Esophagus muscularis mucosa (tissue), 4 donors: ENCODE measurements at regions of chr14 and their contacts with region 1.

Region 1: DNA sequence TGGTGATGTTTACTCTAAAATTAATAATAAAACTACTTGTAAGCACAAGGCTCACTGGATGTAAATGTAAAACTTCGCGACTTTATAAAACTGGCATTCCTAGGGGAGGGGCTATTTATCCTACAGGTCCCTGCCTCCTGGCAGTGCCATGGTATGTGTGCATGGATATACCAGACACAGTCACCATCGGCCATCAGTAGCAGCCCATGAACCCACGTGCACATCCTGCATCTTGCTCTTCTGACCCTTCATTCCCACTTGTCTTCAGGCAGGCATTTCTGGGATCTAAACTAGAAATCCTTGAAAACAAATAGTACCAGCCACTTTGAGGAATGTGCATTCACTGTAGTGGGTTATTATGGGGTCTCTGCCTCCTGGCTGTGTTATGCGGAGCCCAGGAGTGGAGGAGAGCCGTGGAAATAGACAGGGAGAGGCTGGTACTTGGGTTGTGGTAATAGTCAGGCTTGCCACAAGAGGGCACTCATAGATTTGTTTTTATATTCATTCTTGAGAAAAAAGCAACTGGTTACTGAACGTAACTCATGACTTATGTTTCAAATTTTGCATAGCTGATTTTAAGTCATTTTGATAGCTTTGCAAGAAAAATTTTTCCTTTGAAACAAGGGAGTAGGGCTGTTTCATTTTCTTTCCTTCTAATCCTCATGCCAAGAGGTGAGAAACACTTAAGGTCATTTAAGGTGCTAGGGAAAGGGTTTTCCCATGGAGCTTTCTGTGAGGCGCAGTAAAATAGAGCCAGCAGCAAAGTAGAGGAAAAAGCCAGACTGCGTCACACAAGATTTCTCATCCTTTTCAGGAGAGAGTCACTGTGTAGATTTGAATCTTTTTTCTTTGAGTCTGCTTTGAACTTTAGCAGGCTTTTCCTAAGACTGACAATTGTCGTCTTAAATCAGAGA is 17.4 kb upstream of the GALNT16 start:
- DNase-seq: no peak
- H3K4me3 ChIP-seq: no peak overlapping the region
- H3K27ac ChIP-seq: peak overlapping the region; percentile 12 to 52 (median 36)
- H3K4me1 ChIP-seq: peaks cover under 1 to 27% (median 20%) of the 10 kb centered on the region in 4 donors
- H3K27me3 ChIP-seq: no peaks in the 10 kb centered on the region
- CTCF ChIP-seq: peak; percentile 84 to 91 (median 86)
- EP300 ChIP-seq: no peak
- POLR2A ChIP-seq: no peak

Region 2: DNA sequence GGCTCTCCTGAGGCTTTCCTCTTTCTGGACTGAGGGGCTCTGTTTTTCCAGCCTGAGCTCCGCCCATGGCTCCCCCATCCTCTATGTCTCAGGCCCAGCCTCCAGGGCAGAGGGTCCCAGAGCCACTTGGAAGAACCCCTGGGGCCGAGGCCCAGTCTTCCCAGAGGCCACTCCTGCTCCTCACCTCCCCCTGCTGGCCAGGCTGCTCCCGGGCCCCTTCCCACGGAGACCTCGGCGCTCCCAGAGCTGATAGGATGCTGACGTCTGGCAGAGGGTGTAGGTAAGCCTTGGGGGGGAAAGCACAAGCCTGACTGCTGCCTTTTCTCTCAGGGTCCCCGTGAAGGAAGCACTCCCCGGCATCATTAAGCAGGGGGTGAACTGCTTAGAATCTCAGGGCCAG is 104.1 kb after region 1 on chr14:
- intact Hi-C with region 1: loop called (anchors 5 kb)
- DNase-seq: no peak
- H3K4me3 ChIP-seq: no peak overlapping the region
- H3K27ac ChIP-seq: no peak overlapping the region
- H3K4me1 ChIP-seq: peaks cover 0 to 6% (median 2%) of the 10 kb centered on the region in 4 donors
- H3K27me3 ChIP-seq: no peaks in the 10 kb centered on the region
- CTCF ChIP-seq: peak; percentile 42 to 61 (median 45)
- EP300 ChIP-seq: no peak
- POLR2A ChIP-seq: no peak

Region 3: DNA sequence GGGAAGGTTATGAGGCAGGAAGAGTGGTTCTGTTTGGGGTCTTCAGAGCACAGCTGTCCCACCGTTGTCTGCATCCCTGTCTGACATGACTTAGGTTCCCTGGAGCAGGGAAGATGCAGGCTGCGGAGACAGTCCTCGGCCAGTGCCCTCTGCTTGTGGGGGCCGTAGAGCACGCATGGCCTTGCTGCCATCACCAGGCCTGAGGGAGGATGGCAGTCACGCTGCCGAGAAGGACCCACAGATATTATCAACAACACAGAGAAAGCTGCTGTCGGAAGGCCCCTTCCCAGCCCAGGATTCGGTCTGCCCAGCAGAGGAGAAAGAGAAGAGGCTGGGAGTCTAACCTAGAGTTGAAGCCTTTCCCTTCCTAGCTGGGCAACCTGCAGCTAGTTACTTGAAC is 120.5 kb after region 1 on chr14:
- intact Hi-C with region 1: loop called (anchors 5 kb)
- DNase-seq: no peak
- H3K4me3 ChIP-seq: no peak overlapping the region
- H3K27ac ChIP-seq: no peak overlapping the region
- H3K4me1 ChIP-seq: peaks cover 0 to 8% (median 0%) of the 10 kb centered on the region in 4 donors
- H3K27me3 ChIP-seq: no peaks in the 10 kb centered on the region
- CTCF ChIP-seq: peak; percentile 25 to 48 (median 31)
- EP300 ChIP-seq: no peak
- POLR2A ChIP-seq: no peak

Region 4: DNA sequence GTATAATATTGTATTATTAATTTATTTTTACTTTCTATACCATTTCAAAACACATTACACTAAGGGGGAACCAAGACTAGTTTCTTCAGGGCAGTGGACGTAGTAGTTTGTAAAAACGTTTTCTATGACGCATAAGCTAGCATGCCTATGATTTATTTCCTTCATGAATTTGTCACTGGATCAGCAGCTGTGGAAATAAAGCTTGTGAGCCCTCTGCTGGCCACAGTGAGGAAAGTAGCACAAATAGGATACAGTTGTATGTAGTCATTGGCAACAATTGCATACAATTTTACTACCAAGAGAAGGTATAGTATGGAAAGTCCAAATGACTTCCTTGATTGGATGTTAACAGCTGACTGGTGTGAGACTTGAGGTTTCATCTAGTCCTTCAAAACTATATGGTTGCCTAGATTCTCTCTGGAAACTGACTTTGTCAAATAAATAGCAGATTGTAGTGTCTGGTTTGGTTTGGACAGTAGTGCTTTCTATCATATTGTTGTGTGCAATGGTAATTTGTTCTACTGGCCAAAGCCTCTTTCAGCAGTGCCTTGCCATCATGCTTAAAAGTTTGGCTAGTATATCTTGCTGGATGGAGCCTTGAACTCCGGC is 217.6 kb after region 1 on chr14:
- intact Hi-C with region 1: loop called (anchors 5 kb)
- DNase-seq: no peak
- H3K4me3 ChIP-seq: no peak overlapping the region
- H3K27ac ChIP-seq: no peak overlapping the region
- H3K4me1 ChIP-seq: no peaks in the 10 kb centered on the region
- H3K27me3 ChIP-seq: no peaks in the 10 kb centered on the region
- CTCF ChIP-seq: peak; percentile 72 to 83 (median 75)
- EP300 ChIP-seq: no peak
- POLR2A ChIP-seq: no peak